ENCODE measurements at regions of chr19 and their contacts with region 1.

Region 1: DNA sequence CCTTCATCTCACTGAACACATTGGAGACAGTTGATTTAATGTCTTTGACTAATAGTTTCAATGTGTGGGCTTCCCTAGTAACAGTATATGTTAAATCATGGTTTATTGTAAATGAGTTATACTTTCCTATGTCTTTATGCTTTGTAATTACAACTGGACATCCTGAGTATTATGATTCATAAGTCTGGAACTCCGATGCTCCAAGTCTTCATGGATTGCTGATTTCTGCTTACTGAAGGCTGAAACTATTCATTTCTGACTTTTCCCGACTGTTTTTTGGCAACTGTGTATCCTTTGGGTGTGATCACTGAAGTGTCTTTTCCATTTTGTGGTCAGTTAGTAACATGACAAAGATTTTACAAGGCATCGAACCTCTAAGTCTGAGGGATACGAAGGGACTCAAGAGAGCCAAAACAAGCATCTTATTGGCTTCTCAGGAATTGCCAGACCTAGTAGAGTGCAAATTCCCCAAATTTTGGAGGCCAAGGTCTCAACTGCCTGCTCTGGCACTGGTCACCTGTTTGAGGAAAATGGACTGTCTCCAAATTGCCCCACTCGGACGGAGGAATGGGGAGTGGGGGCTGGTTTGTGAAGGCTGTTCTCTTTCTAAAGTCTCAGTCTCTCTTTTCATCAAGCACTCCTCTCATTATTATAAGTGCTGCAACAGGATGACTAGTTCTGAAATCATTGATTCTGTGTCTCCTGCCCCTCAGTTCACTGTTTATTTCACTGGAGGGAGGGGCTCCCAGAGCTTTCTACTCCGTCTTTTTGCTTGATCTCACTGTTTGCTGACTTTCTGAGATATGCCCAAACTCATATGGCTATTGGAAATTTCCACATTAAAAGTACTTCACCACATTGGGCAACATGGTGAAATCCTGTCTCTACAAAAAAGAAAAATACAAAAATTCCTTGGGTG is 20.2 kb upstream of the CD70 start:
- DNase-seq: peak; percentile 90
- H3K4me3 ChIP-seq: peak overlapping the region in 2 of 3 experiments; percentile 0 to 12
- H3K27ac ChIP-seq: peak overlapping the region; percentile 85
- H3K4me1 ChIP-seq: peaks cover 22% of the 10 kb centered on the region
- H3K27me3 ChIP-seq: no peaks in the 10 kb centered on the region
- CTCF ChIP-seq: no peak

Region 2: DNA sequence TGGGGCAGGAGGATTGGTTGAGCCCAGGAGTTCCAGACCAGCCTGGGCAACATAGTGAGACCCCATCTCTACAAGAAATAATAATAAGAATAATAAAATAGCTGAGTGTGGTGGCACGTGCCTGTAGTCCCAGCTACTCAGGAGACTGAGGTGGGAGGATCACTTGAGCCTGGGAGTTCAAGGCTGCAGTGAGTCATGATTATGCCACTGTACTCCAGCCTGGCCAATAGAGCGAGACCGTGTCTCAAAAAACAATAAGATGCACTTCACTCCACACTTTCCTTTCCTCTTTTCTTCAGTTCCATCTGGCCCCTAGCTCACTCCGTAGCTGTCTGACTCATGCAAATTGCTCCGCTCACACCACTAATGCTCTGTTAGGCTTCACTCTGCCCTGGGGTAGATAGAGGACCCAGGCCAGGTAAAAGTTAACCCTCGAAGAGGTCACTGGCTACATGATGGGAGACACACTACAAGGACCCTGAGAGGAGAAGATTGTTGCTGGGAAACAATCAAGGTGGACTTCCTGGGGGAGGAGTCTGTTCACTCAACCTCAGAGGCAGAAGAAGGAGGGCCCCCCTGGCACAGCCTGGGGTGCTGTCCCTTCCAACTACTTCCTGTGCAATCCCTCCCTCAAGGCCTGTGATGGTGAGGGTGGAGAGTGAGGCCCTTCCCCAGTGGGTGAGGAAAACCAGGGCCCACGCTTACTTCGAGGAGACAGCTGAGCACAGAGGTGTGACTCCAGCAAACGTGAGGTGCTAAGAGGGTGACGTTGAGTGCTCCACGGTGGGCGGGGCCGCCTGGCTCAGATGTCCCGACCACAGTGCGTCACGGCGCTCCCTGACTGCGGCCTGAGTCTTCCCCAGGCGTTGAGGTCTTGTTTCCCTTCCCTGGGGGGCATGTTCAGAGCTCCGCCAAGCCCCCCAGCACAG is 89.2 kb before region 1 on chr19:
- CTCF ChIA-PET with region 1: no interaction called
- dilution Hi-C with region 1: loop called (anchors 5 kb)
- in situ Hi-C with region 1: no loop called
- intact Hi-C with region 1: no loop called
- DNase-seq: no peak
- H3K4me3 ChIP-seq: no peak overlapping the region
- H3K27ac ChIP-seq: no peak overlapping the region
- H3K4me1 ChIP-seq: peaks cover 16% of the 10 kb centered on the region
- H3K27me3 ChIP-seq: no peaks in the 10 kb centered on the region
- CTCF ChIP-seq: no peak

Region 3: GRCh38 chr19:6530386-6531161 is 80.6 kb before region 1 on chr19 and contains the start of gene TNFSF9:
- CTCF ChIA-PET with region 1: no interaction called
- dilution Hi-C with region 1: no loop called
- in situ Hi-C with region 1: no loop called
- intact Hi-C with region 1: loop called (anchors 1 kb)
- DNase-seq: peak; percentile 87
- H3K4me3 ChIP-seq: peak within 1 kb of the TSS; percentile 63 to 88 (median 77)
- H3K27ac ChIP-seq: peak within 1 kb of the TSS; percentile 90
- H3K4me1 ChIP-seq: peaks cover 11% of the 10 kb centered on the region
- H3K27me3 ChIP-seq: no peaks in the 10 kb centered on the region
- CTCF ChIP-seq: no peak
- total RNA-seq, gene TNFSF9: 9.5 to 15.2 TPM

Region 4: DNA sequence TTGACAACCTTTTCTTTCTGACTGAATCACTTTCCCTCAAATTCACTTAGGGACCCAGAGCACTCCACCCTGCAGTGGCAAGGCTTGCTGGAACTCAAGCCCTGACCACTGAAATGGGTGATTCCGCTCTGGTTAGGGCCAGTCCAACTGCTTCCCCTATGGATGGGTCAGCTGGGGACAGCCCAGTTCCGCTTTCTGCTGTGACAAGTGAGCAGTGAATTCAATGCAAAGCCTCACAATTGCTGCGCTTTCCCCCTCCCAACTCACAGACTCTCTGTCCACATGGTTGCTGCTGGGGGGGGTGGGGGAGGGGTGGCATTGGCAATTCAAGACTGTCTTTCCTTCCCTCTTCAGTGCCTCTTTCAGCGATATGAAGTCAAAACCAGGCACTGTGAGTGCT is 39.0 kb before region 1 on chr19:
- CTCF ChIA-PET with region 1: no interaction called
- dilution Hi-C with region 1: loop called (anchors 5 kb)
- in situ Hi-C with region 1: no loop called
- intact Hi-C with region 1: no loop called
- DNase-seq: no peak
- H3K4me3 ChIP-seq: no peak overlapping the region
- H3K27ac ChIP-seq: no peak overlapping the region
- H3K4me1 ChIP-seq: peaks cover 14% of the 10 kb centered on the region
- H3K27me3 ChIP-seq: no peaks in the 10 kb centered on the region
- CTCF ChIP-seq: no peak

Region 5: DNA sequence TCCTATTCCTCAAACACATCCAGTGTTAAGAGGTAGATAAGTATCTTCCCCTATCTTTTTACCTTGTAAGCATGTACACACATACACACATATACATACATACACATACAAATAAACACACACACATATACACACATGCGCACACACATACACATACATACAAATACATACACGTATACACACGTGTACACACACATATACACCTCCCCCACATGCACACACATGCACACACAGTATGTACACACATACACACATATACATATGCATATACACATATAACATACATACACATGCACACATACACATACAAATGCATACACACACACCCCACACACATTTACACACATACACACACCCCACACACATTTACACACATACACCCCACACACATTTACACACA is 300.3 kb after region 1 on chr19:
- CTCF ChIA-PET with region 1: no interaction called
- dilution Hi-C with region 1: no loop called
- in situ Hi-C with region 1: no loop called
- intact Hi-C with region 1: no loop called
- DNase-seq: no peak
- H3K4me3 ChIP-seq: no peak overlapping the region
- H3K27ac ChIP-seq: no peak overlapping the region
- H3K4me1 ChIP-seq: no peaks in the 10 kb centered on the region
- H3K27me3 ChIP-seq: no peaks in the 10 kb centered on the region
- CTCF ChIP-seq: no peak

Measured in mammary epithelial cell (primary cell).